Cardiac septum (tissue), 1 donor: ENCODE measurements at regions of chr1 and their contacts with region 1.

Region 1: GRCh38 chr1:29202584-29203340 is 21.1 kb upstream of the SRSF4 start:
- DNase-seq: peak; percentile 96

Region 2: DNA sequence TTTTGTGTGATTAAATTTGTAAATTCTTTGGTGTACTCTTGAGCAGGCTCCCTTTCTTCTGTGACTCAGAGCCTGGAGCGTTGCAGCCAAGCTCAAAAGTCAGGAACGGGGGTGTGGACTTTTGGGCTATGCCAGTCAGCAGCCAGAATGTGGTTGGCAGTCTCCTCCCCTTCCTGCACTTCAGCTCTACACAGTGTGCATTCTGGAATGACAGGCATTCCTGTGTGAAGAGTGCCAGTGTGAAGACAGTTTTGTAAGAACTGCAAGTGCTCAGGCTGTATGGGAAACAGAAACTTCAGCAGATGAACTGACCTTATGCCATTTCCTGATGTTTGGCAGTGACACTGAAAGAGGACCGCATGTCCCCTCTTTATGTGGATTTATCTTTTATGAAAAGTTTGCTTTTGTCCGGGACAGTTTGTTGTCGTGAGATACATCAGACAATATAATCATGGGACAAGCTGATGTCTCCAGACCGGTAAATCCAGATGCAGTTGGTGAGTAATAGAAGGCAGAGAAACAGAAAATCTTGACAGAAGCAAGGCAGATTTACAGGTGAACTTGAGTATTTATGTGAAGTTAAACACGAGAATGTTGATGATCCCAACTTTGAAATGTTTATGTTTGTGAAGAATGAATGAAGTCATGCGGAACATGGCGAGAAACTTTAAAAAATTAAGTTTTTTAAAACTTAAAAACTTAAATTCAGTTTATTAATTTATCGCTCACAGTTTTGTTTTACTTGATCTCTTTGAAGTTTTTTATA is 764.6 kb before region 1 on chr1:
- intact Hi-C with region 1: no loop called
- DNase-seq: peak; percentile 82

Region 3: DNA sequence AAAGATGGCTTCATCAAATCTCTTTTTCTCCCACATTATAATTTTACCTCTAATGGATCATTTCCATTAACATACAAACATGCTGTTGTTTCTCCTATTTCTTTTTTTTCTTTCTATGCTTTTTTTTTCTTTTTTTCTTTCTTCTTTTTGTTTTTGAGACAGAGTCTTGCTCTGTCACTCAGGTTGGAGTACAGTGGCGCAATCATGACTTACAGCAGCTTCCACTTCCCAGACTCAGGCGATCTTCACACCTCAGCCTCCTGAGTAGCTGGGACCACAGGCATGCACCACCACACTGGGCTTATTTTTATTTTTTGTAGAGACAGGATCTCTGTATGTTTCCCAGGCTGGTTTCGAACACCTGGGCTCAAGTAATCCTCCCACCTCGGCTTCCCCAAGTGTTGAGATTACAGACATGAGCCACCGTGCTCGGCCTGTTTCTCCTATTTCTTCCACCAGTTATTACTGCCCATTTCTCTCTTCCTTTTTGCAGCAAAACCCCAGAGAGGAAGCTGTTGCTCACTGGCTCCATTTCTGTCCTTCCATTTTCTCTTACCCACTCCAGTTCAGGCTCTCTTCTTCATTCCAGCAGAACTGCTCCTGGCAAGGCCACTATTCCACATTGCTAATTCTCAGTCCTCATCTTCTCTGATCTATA is 422.9 kb before region 1 on chr1:
- intact Hi-C with region 1: loop called (anchors 2 kb)
- DNase-seq: no peak

Region 4: GRCh38 chr1:28983509-28984310 is 219.1 kb before region 1 on chr1:
- intact Hi-C with region 1: loop called (anchors 5 kb)
- DNase-seq: peak; percentile 76

Region 5: DNA sequence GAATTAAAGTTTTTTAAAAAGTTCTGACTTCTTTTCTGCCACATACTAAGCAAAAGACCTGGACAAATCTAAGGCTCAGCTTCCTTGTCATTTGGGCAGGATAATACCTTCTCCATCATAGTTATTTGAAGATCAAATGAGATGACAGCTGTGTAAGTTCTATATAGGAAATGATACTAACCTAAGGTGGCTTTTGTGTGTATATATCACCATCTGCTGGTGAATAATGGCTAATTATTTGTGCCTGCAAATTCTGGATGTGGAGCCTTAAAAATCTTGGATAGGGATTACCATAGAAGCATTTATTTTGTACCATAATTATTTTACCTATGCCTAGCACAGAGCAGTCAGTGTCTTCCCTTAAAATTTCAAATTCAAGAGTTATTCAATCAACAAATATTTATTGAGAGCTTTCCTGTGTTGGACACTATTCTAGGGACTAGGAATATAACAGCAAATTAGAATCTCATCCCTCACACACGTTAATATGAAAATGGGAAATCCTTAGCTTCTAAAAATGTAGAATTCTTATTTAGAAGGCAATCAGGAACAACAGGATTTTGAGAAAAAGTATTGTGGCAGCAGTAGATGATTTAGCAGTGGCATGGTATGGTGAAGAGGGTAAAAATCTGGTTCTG is 168.8 kb before region 1 on chr1:
- intact Hi-C with region 1: loop called (anchors 2 kb)
- DNase-seq: no peak

Region 6: DNA sequence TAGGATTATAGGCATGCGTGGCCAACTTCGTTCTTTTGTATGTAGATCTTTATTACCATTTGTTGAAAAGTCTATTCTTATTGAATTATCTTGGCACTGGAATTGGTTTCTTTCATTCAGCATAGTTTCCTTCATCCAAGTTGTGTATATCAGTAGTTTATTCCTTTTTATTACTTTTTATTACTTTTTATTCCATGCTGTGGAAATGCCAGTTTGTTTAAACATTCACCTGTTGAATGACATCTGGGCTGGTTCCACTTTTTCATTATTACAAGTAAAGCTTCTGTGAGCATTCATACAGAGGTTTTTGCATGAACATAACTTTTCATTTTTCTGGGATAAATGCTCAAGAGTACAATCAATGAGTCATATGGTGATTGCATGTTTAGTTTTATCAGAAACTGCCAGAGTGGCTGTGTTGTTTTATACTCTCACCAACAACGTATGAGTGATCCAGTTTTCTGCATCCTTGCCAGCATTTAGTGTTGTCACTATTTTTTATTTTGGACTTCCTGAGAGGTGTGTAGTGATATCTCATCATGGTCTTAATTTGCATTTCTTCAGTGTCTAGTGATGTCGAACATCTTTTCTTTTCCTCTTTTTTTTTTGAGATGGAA is 62.1 kb after region 1 on chr1:
- intact Hi-C with region 1: no loop called
- DNase-seq: no peak